PC-9 (cell line): ENCODE measurements at regions of chr17 and their contacts with region 1.

Region 1: DNA sequence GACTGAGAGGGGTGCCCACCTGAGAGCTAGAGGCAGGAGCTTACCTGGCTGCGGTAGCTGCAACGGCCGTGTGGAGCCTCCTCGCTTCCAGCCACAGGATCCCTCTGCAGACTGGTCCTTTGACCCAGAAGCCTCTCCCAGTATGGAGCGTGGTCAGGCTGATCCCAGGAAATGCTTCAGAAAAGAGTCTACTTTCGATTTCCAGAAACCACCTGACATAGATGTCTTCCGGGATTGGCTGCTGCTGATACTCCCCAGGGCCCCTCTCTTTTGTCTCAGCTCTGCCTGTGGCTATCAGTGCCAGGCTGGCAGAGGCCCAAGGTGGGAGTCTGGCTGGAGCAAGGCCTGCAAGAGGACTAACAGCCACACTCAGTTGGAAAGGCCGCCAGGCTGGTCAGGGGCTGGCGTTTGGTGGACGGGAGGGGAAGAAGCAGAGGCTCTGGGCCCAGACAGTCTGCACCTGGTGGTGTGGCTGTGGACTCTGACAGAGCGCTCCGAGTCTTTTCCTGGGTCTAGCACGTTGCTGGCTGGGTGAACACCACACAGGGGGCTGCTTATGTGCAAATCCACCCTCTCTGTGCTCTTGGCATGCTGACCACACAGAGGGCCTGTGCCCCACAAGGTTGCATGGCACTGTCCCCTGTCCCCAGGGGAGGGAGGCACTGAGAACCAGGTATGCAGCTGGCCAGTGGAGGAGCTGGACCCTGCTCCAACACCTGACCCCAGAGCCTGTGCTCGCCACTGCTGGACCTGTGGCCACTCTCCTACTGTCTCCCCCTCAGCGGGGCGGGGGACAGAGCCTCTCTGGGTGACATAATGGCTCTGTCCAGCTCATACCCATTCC is at the start of gene LGALS3BP:
- DNase-seq: peak; percentile 76 to 87
- H3K4me3 ChIP-seq: peak within 1 kb of the TSS; percentile 81
- H3K27ac ChIP-seq: peak within 1 kb of the TSS; percentile 45; the same call in 1 of the 2 replicates
- H3K4me1 ChIP-seq: peaks cover 21% of the 10 kb centered on the region
- H3K27me3 ChIP-seq: no peaks in the 10 kb centered on the region
- CTCF ChIP-seq: no peak
- total RNA-seq, gene LGALS3BP: 507 and 685 TPM in 2 replicates

Region 2: DNA sequence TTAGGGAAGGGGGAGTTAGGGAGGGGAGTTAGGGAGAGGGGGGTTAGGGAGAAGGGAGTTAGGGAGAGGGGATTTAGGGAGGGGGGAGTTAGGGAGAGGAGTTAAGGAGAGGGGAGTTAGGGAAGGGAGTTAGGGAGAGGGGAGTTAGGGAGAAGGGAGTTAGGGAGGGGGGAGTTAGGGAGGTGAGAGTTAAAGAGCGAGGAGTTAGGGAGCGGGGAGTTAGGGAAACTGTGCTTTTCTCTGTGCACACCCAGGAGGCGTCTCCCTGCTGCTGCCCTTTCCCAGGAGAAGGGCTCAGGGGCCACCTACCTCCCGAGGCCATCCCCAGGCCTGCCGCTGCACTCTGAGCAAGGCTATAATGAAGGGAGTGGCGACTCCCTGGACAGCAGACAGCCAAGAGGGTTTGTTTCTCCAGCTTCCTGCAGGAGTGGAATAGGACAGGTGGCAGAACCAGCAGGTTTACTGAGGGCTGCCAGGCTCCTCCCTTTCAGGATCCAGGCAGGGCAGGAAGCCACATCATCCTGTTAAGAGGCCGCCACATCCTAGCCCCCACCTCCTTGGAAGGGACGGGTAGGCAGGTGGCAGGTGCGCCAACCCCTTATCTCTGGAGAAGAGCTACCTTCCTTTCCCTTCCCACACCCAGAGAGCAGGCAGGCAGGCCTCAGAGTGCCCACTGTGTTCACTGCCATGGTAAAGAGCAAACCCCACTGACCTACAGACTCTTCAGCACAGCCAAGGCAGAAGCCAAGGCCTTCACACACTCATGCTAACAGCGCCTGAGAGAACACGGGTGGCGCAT is 25.3 kb after region 1 on chr17:
- CTCF ChIA-PET with region 1: interaction called, 5 read pairs
- POLR2A ChIA-PET with region 1: no interaction called
- intact Hi-C with region 1: loop called (anchors 2 kb)
- DNase-seq: peak; percentile 85 to 89
- H3K4me3 ChIP-seq: peak overlapping the region; percentile 16; the same call in 1 of the 2 replicates
- H3K27ac ChIP-seq: peak overlapping the region; percentile 76
- H3K4me1 ChIP-seq: peaks cover 40% of the 10 kb centered on the region
- H3K27me3 ChIP-seq: no peaks in the 10 kb centered on the region
- CTCF ChIP-seq: no peak

Region 3: GRCh38 chr17:79036596-79036995 is 56.6 kb after region 1 on chr17:
- CTCF ChIA-PET with region 1: no interaction called
- POLR2A ChIA-PET with region 1: interaction called, 10 read pairs
- intact Hi-C with region 1: no loop called
- DNase-seq: peak in 1 of 2 experiments; percentile 77
- H3K4me3 ChIP-seq: no peak overlapping the region
- H3K27ac ChIP-seq: 0 out of 2 replicates have a peak overlapping the region, but pooled peaks have one; percentile 32
- H3K4me1 ChIP-seq: peaks cover 26% of the 10 kb centered on the region
- H3K27me3 ChIP-seq: no peaks in the 10 kb centered on the region
- CTCF ChIP-seq: no peak